ENCODE measurements at regions of chr22 and their contacts with region 1.

Region 1: GRCh38 chr22:29766632-29767170 is at the start of gene ZMAT5:
- DNase-seq: peak; percentile 96 to 98
- H3K4me3 ChIP-seq: peak within 1 kb of the TSS; percentile 98
- H3K4me3 Mint-ChIP-seq: peak within 1 kb of the TSS; percentile 99
- H3K27ac Mint-ChIP-seq: peak within 1 kb of the TSS; percentile 99
- H3K4me1 ChIP-seq: peaks cover 30% of the 10 kb centered on the region
- H3K4me1 Mint-ChIP-seq: peaks cover 19% of the 10 kb centered on the region
- H3K27me3 ChIP-seq: no peaks in the 10 kb centered on the region
- H3K27me3 Mint-ChIP-seq: no peaks in the 10 kb centered on the region
- CTCF ChIP-seq: no peak
- total RNA-seq, gene ZMAT5: 13.0 and 19.7 TPM in 2 replicates

Region 2: DNA sequence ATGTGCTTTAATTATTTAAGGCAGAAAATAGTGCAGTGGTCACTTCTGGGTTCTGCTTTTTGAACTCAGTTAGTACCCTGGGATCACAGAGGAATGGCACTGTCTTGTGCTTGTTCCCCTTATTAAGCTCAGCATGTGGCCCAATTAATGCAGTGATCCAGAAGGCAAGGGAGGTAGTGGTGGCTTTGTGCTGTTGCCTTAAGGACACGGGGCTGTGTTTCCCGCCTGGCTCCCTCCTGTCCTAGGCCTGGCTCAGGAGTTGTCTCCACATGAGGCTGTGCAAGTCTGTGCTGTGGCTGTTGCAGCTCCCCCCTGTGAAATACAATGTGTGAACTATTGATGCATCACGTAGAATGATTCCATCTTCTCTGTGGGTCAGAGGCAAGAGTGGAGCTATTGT is 96.1 kb before region 1 on chr22:
- CTCF ChIA-PET with region 1: no interaction called
- POLR2A ChIA-PET with region 1: no interaction called
- intact Hi-C with region 1: no loop called
- DNase-seq: no peak
- H3K4me3 ChIP-seq: no peak overlapping the region
- H3K4me3 Mint-ChIP-seq: no peak overlapping the region
- H3K27ac Mint-ChIP-seq: no peak overlapping the region
- H3K4me1 ChIP-seq: no peaks in the 10 kb centered on the region
- H3K4me1 Mint-ChIP-seq: no peaks in the 10 kb centered on the region
- H3K27me3 ChIP-seq: no peaks in the 10 kb centered on the region
- H3K27me3 Mint-ChIP-seq: no peaks in the 10 kb centered on the region
- CTCF ChIP-seq: no peak

Region 3: DNA sequence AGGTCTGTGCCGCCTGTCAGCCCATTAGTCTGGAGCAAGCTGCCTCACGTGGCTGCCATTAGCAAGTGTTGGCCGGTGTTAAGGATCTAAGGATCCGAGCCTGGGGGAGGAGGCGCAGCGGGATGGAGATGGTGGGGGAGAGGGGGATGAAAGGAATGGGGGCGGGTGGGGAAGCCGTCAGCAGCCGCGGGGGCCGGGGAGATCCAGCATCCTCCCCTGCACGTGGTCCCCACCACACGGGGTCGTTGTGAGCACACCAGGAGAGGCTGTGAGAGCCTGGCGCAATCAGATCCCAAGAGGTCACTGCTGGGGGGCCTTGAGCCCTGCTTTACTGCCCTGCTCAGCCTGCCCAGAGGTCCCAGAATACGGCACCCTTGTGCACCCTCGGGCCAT is 39.6 kb before region 1 on chr22:
- CTCF ChIA-PET with region 1: no interaction called
- POLR2A ChIA-PET with region 1: no interaction called
- intact Hi-C with region 1: loop called (anchors 5 kb)
- DNase-seq: peak; percentile 63 to 68
- H3K4me3 ChIP-seq: no peak overlapping the region
- H3K4me3 Mint-ChIP-seq: no peak overlapping the region
- H3K27ac Mint-ChIP-seq: no peak overlapping the region
- H3K4me1 ChIP-seq: peaks cover 3% of the 10 kb centered on the region; the same call in 1 of the 2 replicates
- H3K4me1 Mint-ChIP-seq: no peaks in the 10 kb centered on the region
- H3K27me3 ChIP-seq: no peaks in the 10 kb centered on the region
- H3K27me3 Mint-ChIP-seq: no peaks in the 10 kb centered on the region
- CTCF ChIP-seq: peak; percentile 52 to 69

Region 4: GRCh38 chr22:29801153-29801552 is 34.5 kb after region 1 on chr22:
- CTCF ChIA-PET with region 1: no interaction called
- POLR2A ChIA-PET with region 1: no interaction called
- intact Hi-C with region 1: loop called (anchors 5 kb)
- DNase-seq: peak; percentile 54 to 58
- H3K4me3 ChIP-seq: no peak overlapping the region
- H3K4me3 Mint-ChIP-seq: peak overlapping the region; percentile 11
- H3K27ac Mint-ChIP-seq: peak overlapping the region; percentile 83
- H3K4me1 ChIP-seq: peaks cover 37% of the 10 kb centered on the region
- H3K4me1 Mint-ChIP-seq: peaks cover 8% of the 10 kb centered on the region
- H3K27me3 ChIP-seq: no peaks in the 10 kb centered on the region
- H3K27me3 Mint-ChIP-seq: no peaks in the 10 kb centered on the region
- CTCF ChIP-seq: no peak

Region 5: GRCh38 chr22:30038219-30038618 is 271.5 kb after region 1 on chr22:
- CTCF ChIA-PET with region 1: no interaction called
- POLR2A ChIA-PET with region 1: no interaction called
- intact Hi-C with region 1: no loop called
- DNase-seq: peak in 1 of 2 experiments; percentile 18
- H3K4me3 ChIP-seq: no peak overlapping the region
- H3K4me3 Mint-ChIP-seq: no peak overlapping the region
- H3K27ac Mint-ChIP-seq: no peak overlapping the region
- H3K4me1 ChIP-seq: peaks cover 9% of the 10 kb centered on the region
- H3K4me1 Mint-ChIP-seq: peaks cover 15% of the 10 kb centered on the region
- H3K27me3 ChIP-seq: no peaks in the 10 kb centered on the region
- H3K27me3 Mint-ChIP-seq: no peaks in the 10 kb centered on the region
- CTCF ChIP-seq: no peak

Region 6: GRCh38 chr22:30079952-30080533 is 313.3 kb after region 1 on chr22 and contains the start of gene HORMAD2:
- CTCF ChIA-PET with region 1: no interaction called
- POLR2A ChIA-PET with region 1: no interaction called
- intact Hi-C with region 1: loop called (anchors 10 kb)
- DNase-seq: no peak
- H3K4me3 ChIP-seq: no peak within 1 kb of the TSS
- H3K4me3 Mint-ChIP-seq: no peak within 1 kb of the TSS
- H3K27ac Mint-ChIP-seq: no peak within 1 kb of the TSS
- H3K4me1 ChIP-seq: peaks cover 27% of the 10 kb centered on the region
- H3K4me1 Mint-ChIP-seq: peaks cover 27% of the 10 kb centered on the region
- H3K27me3 ChIP-seq: no peaks in the 10 kb centered on the region
- H3K27me3 Mint-ChIP-seq: no peaks in the 10 kb centered on the region
- CTCF ChIP-seq: no peak
- total RNA-seq, gene HORMAD2: 2.4 and 3.1 TPM in 2 replicates

Measured in Caco-2 (cell line).